Activated CD8-positive, alpha-beta T cell treated with anti-CD3 and anti-CD28 coated beads for 36 hours (primary cell): ENCODE measurements at regions of chr19 and their contacts with region 1.

Region 1: DNA sequence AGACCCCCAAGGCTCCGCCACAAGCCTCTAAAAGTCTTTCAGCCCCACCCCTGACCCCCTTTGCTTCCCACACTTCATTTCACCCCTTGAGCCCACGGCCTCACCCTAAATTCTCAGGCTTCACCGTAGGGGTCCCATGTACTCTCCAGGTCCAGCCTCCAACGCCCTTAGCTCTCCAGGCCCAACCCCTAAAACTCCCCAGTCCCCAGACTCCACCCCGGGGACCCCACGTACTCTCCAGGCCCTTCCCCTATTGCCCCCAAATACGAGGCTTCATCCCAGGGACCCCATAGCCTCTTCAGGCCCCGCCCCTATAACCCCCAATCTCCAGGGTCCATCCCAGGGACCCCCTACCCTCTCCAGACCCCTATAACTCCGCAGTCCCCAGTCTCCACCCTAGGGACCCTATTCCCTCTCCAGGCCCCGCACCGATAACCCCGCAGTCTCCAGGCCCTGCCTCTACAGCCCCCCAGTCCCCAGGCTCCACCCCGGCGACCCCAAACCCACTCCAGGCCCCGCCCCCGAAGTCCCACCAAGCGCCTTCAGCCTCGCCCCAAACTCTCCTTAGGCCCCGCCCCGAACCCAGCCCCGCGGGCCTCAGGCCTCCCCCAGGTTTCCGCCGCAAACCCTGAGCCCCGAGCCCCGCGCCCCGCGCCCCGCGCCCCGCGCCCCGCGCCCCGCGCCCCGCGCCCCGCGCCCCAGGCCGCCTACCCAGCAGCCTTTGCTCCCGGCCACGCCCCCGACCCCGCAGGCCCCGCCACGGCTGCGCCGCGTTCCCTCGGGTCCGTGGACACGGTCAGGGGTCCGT is 540 bp downstream of the MED16 start:
- DNase-seq: peak; percentile 53
- ATAC-seq: peak; percentile 40
- H3K4me3 Mint-ChIP-seq: peak overlapping the region; percentile 76
- H3K27ac Mint-ChIP-seq: peak overlapping the region; percentile 80
- H3K4me1 Mint-ChIP-seq: peaks cover 13% of the 10 kb centered on the region
- H3K27me3 Mint-ChIP-seq: no peaks in the 10 kb centered on the region
- CTCF ChIP-seq: no peak

Region 2: GRCh38 chr19:835210-835810 is 57.1 kb before region 1 on chr19:
- CTCF ChIA-PET with region 1: no interaction called
- POLR2A ChIA-PET with region 1: no interaction called
- intact Hi-C with region 1: no loop called
- DNase-seq: no peak
- ATAC-seq: no peak
- H3K4me3 Mint-ChIP-seq: no peak overlapping the region
- H3K27ac Mint-ChIP-seq: no peak overlapping the region
- H3K4me1 Mint-ChIP-seq: peaks cover 2% of the 10 kb centered on the region
- H3K27me3 Mint-ChIP-seq: peaks cover 8% of the 10 kb centered on the region
- CTCF ChIP-seq: no peak

Region 3: GRCh38 chr19:907183-907853 is 14.9 kb after region 1 on chr19:
- CTCF ChIA-PET with region 1: interaction called, 5 read pairs
- POLR2A ChIA-PET with region 1: interaction called, 15 read pairs
- intact Hi-C with region 1: no loop called
- DNase-seq: peak; percentile 84
- ATAC-seq: peak; percentile 59
- H3K4me3 Mint-ChIP-seq: no peak overlapping the region
- H3K27ac Mint-ChIP-seq: peak overlapping the region; percentile 93
- H3K4me1 Mint-ChIP-seq: peaks cover 57% of the 10 kb centered on the region
- H3K27me3 Mint-ChIP-seq: no peaks in the 10 kb centered on the region
- CTCF ChIP-seq: no peak